ENCODE measurements at regions of chr6 and their contacts with region 1.

Region 1: DNA sequence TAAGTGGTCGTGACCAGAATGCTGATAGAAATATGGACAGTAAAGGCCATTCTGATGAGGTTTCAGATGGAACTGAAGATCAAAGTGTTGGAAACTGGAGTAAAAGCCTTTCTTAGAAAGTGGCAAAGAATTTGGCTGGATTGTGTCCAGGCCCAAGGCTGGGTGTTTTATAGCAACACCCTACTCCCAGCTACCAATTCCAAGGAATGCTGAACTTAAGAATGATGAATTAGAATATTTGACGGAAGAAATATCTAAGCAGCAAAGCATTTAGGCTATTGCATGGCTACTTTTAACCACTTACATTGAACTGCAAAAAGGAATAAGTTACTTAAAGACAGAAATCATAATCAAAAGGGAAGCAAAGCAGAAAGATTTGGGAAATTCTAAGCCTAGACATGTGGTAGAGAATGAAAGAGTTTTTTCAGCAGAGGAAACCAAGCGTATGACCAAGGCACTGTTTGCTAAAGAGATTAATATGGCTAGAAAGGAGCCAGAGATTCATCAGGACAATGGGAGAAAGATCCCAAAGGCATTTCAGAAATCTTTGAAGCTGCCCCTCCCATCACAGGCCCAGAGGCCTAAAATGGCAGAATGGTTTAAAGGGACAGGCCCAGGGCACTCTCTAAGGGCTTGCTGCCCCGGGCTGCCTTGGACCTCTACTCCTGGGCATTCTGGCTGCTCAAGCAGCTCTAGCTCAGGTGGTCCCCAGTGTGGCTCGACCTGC is 25.8 kb downstream of the SDHAF4 start:
- DNase-seq: no peak
- ATAC-seq: no peak
- H3K4me3 ChIP-seq: no peak overlapping the region
- H3K27ac ChIP-seq: no peak overlapping the region
- H3K4me1 ChIP-seq: no peaks in the 10 kb centered on the region
- H3K27me3 ChIP-seq: no peaks in the 10 kb centered on the region
- CTCF ChIP-seq: no peak
- POLR2A ChIP-seq: no peak
- RAD21 ChIP-seq: no peak

Region 2: DNA sequence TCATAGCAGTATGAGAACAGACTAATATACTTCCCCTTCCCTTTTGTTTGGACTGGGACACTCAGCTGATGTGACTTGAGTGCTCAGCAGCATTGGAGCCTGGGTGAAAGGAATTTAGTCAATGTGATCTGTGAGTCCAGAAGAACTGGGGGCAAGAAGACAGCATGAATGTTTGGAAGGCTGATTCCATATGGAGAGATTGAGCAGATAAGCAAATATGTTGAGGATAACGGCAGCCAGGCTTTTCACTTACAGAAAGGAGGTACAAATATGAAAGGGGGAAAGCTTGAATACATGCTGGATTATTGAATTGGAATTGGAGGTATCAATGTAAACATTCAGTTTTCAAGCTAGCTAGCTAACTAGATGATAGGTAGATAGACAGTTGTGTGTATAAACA is 37.4 kb after region 1 on chr6:
- CTCF ChIA-PET with region 1: no interaction called
- POLR2A ChIA-PET with region 1: no interaction called
- RAD21 ChIA-PET with region 1: no interaction called
- intact Hi-C with region 1: loop called (anchors 5 kb)
- DNase-seq: no peak
- ATAC-seq: no peak
- H3K4me3 ChIP-seq: no peak overlapping the region
- H3K27ac ChIP-seq: no peak overlapping the region
- H3K4me1 ChIP-seq: no peaks in the 10 kb centered on the region
- H3K27me3 ChIP-seq: 0 out of 2 replicates have a peak, but pooled peaks cover 3% of the 10 kb centered on the region
- CTCF ChIP-seq: no peak
- POLR2A ChIP-seq: no peak
- RAD21 ChIP-seq: no peak

Region 3: DNA sequence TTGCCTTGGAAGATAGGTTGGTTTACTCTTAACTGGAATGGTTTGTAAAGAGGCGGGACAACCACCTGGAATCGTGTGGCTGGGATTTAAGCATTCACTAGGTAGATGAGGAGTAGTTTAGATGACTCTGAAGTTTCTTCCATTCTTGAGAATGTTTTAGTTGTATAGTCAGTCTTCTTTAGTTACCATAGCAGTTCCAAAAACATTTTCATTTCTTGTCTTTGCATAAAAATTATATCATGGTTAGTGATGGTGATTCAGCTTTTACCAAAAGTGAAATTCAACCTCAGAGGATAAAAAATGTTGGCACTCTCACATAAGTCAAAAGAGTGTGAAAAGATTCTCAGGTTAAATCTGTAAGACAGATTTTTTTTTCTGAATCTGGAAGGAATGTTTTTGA is 145.5 kb after region 1 on chr6:
- CTCF ChIA-PET with region 1: no interaction called
- POLR2A ChIA-PET with region 1: no interaction called
- RAD21 ChIA-PET with region 1: no interaction called
- intact Hi-C with region 1: no loop called
- DNase-seq: no peak
- ATAC-seq: no peak
- H3K4me3 ChIP-seq: no peak overlapping the region
- H3K27ac ChIP-seq: no peak overlapping the region
- H3K4me1 ChIP-seq: no peaks in the 10 kb centered on the region
- H3K27me3 ChIP-seq: no peaks in the 10 kb centered on the region
- CTCF ChIP-seq: no peak
- POLR2A ChIP-seq: no peak
- RAD21 ChIP-seq: no peak

Measured in HCT116 (cell line).